H1 (cell line): ENCODE measurements at regions of chr11 and their contacts with region 1.

Region 1: GRCh38 chr11:127843483-127844396 is 743.6 kb downstream of the ETS1 start:
- DNase-seq: peak; percentile 33 to 88
- H3K4me3 ChIP-seq: no peak overlapping the region
- H3K27ac ChIP-seq: no peak overlapping the region
- H3K4me1 ChIP-seq: 0 out of 7 replicates have a peak, but pooled peaks cover 0 to 2% (median 0%) of the 10 kb centered on the region in 4 experiments
- H3K27me3 ChIP-seq: no peaks in the 10 kb centered on the region
- CTCF ChIP-seq: peak; percentile 64 to 74 (median 71)
- EP300 ChIP-seq: no peak
- POLR2A ChIP-seq: no peak
- RAD21 ChIP-seq: peak; percentile 69 to 77

Region 2: GRCh38 chr11:127670374-127671119 is 173.2 kb before region 1 on chr11:
- CTCF ChIA-PET with region 1: no interaction called
- POLR2A ChIA-PET with region 1: no interaction called
- DNase-seq: no peak
- H3K4me3 ChIP-seq: no peak overlapping the region
- H3K27ac ChIP-seq: no peak overlapping the region
- H3K4me1 ChIP-seq: no peaks in the 10 kb centered on the region
- H3K27me3 ChIP-seq: no peaks in the 10 kb centered on the region
- CTCF ChIP-seq: no peak
- EP300 ChIP-seq: no peak
- POLR2A ChIP-seq: no peak
- RAD21 ChIP-seq: no peak

Region 3: GRCh38 chr11:127818625-127819024 is 25.1 kb before region 1 on chr11:
- CTCF ChIA-PET with region 1: interaction called, 12 read pairs
- POLR2A ChIA-PET with region 1: no interaction called
- DNase-seq: no peak
- H3K4me3 ChIP-seq: no peak overlapping the region
- H3K27ac ChIP-seq: no peak overlapping the region
- H3K4me1 ChIP-seq: no peaks in the 10 kb centered on the region
- H3K27me3 ChIP-seq: no peaks in the 10 kb centered on the region
- CTCF ChIP-seq: no peak
- EP300 ChIP-seq: no peak
- POLR2A ChIP-seq: no peak
- RAD21 ChIP-seq: no peak

Region 4: DNA sequence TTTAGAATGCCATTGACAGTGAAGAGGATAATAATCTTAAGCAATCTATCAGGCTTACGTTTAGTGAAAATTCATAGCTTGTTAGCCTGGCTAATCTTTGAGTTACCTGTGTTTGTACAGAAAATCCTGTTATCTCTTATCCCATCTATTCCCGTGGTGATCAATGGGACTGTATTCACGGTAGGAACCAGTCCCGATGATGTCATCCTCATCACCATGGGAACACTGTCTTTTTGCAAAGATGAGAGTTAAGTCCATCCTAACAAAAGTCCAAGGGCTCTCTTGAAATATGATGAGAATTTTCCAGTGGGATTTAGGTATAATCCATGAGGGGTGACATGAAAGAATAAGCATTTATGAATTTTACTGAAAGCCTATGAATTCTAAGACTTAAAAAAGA is 18.6 kb before region 1 on chr11:
- CTCF ChIA-PET with region 1: interaction called, 17 read pairs
- POLR2A ChIA-PET with region 1: no interaction called
- DNase-seq: no peak
- H3K4me3 ChIP-seq: no peak overlapping the region
- H3K27ac ChIP-seq: no peak overlapping the region
- H3K4me1 ChIP-seq: no peaks in the 10 kb centered on the region
- H3K27me3 ChIP-seq: no peaks in the 10 kb centered on the region
- CTCF ChIP-seq: no peak
- EP300 ChIP-seq: no peak
- POLR2A ChIP-seq: no peak
- RAD21 ChIP-seq: no peak

Region 5: DNA sequence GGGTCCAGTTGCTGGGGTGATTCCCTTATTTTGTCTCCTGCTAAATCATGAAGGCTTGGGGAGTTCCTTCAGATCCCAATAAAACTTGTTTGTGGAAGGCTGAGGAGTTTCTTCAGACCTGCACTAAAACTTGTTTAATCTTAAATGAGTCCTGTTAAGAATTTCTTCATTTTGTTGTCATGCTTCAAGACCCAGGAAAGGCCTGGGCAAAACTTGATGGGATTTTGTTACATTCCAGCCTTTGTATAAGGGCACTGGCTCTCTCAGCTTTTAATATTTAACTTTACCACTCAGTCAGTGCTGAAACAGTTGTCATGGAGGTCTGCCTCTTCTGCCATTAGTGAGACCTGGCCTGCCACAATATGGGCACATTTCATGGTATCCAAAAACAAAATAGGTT is 44.6 kb after region 1 on chr11:
- CTCF ChIA-PET with region 1: no interaction called
- POLR2A ChIA-PET with region 1: no interaction called
- DNase-seq: no peak
- H3K4me3 ChIP-seq: no peak overlapping the region
- H3K27ac ChIP-seq: no peak overlapping the region
- H3K4me1 ChIP-seq: no peaks in the 10 kb centered on the region
- H3K27me3 ChIP-seq: peaks cover 0 to 1% (median 0%) of the 10 kb centered on the region in 4 experiments; a peak in 1 of 7 replicates
- CTCF ChIP-seq: no peak
- EP300 ChIP-seq: no peak
- POLR2A ChIP-seq: no peak
- RAD21 ChIP-seq: no peak

Region 6: DNA sequence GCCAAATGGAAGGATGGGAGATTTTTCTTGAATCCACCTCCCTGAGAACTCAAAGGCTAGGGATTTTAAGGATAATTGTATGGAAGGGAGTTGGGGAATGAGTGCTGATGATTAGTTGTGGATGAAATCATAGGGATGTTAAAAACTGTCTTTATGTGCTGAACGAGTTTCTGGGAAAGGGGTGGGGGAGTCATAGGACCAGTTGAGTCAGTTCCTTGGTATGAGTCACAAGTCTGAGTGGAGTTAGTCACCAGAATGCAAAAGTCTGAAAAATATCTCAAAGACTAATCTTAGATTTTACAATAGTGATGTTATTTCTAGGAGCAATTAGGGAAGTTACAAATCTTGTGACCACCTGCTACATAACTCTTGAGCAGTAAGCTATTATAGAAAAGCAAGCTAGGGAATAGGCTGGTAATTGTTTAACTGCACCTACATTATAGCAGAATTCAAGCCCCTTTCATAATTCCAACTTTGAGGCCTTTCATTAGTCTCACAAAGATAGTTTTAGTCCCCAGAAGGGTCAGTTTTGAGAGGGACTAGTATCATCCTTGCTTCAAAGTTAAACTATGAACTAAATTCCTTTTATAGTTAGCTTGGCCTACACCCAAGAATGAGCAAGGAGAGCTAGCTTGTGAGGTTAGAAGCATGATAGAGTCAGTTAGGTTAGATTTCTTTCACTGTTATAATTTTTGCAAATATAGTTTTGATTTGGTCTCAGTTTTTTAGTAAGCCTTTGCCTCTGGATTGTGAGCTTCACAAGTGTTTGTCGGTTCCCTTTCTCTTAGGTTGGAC is 75.7 kb after region 1 on chr11:
- CTCF ChIA-PET with region 1: no interaction called
- POLR2A ChIA-PET with region 1: no interaction called
- DNase-seq: no peak
- H3K4me3 ChIP-seq: no peak overlapping the region
- H3K27ac ChIP-seq: no peak overlapping the region
- H3K4me1 ChIP-seq: no peaks in the 10 kb centered on the region
- H3K27me3 ChIP-seq: no peaks in the 10 kb centered on the region
- CTCF ChIP-seq: no peak
- EP300 ChIP-seq: no peak
- POLR2A ChIP-seq: no peak
- RAD21 ChIP-seq: no peak

Region 7: DNA sequence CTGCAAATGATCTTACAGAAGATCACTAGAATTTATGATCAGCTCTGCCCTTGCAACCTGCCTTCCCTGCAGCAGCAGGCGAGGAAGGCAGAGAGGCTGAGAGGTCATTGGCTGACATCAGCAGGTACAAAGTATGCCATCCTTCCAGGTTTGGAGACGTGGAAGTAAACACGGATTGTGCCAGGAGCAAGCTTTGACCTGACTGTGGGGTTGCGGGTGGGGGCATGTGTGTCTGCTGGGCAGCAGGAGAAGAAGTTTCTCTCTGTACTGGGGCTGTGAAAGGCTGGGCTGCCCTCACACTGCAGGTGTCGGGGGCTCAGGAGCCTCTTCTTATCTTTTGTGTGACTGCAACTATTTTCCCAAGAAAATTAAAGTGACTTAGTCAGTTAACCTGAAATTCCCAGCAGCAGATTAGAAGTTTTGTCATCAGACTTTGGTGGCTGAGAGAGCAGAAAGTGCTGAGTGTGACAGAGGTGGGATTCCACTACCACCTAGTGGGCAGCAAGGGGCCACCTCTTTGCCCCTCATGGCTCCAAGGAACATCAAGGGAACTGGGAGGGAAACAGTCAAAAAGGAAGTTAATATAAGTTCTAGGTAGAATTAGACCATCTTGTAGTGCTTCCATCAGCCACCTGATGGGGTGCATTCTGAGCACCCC is 177.7 kb after region 1 on chr11:
- CTCF ChIA-PET with region 1: interaction called, 14 read pairs
- POLR2A ChIA-PET with region 1: no interaction called
- DNase-seq: peak in 1 of 2 experiments; percentile 3
- H3K4me3 ChIP-seq: no peak overlapping the region
- H3K27ac ChIP-seq: no peak overlapping the region
- H3K4me1 ChIP-seq: no peaks in the 10 kb centered on the region
- H3K27me3 ChIP-seq: peaks cover 0 to 1% (median 0%) of the 10 kb centered on the region in 4 experiments; a peak in 1 of 7 replicates
- CTCF ChIP-seq: peak; percentile 62 to 71 (median 67)
- EP300 ChIP-seq: no peak
- POLR2A ChIP-seq: no peak
- RAD21 ChIP-seq: peak; percentile 90 to 92